OCI-LY7 (cell line): ENCODE measurements at regions of chr6 and their contacts with region 1.

Region 1: GRCh38 chr6:132300323-132300949 is 100.8 kb downstream of the MOXD1 start:
- DNase-seq: peak; percentile 82
- H3K4me3 ChIP-seq: no peak overlapping the region
- H3K27ac ChIP-seq: no peak overlapping the region
- H3K4me1 ChIP-seq: peaks cover 35% of the 10 kb centered on the region
- CTCF ChIP-seq: peak; percentile 97

Region 2: GRCh38 chr6:131858765-131859415 is 441.5 kb before region 1 on chr6:
- CTCF ChIA-PET with region 1: no interaction called
- POLR2A ChIA-PET with region 1: no interaction called
- intact Hi-C with region 1: no loop called
- DNase-seq: no peak
- H3K4me3 ChIP-seq: no peak overlapping the region
- H3K27ac ChIP-seq: no peak overlapping the region
- H3K4me1 ChIP-seq: no peaks in the 10 kb centered on the region
- CTCF ChIP-seq: no peak

Region 3: GRCh38 chr6:131923356-131923755 is 377.1 kb before region 1 on chr6:
- CTCF ChIA-PET with region 1: interaction called, 5 read pairs
- POLR2A ChIA-PET with region 1: no interaction called
- intact Hi-C with region 1: loop called (anchors 1 kb)
- DNase-seq: peak; percentile 84
- H3K4me3 ChIP-seq: no peak overlapping the region
- H3K27ac ChIP-seq: no peak overlapping the region
- H3K4me1 ChIP-seq: peaks cover 7% of the 10 kb centered on the region
- CTCF ChIP-seq: peak; percentile 95

Region 4: GRCh38 chr6:132286026-132287019 is 14.1 kb before region 1 on chr6:
- CTCF ChIA-PET with region 1: no interaction called
- POLR2A ChIA-PET with region 1: interaction called, 22 read pairs
- intact Hi-C with region 1: no loop called
- DNase-seq: peak; percentile 24
- H3K4me3 ChIP-seq: no peak overlapping the region
- H3K27ac ChIP-seq: no peak overlapping the region
- H3K4me1 ChIP-seq: peaks cover 15% of the 10 kb centered on the region
- CTCF ChIP-seq: 0 out of 2 replicates have a peak, but pooled peaks have one; percentile 19

Region 5: GRCh38 chr6:132483779-132484679 is 183.6 kb after region 1 on chr6:
- CTCF ChIA-PET with region 1: interaction called, 4 read pairs
- POLR2A ChIA-PET with region 1: interaction called, 5 read pairs
- intact Hi-C with region 1: loop called (anchors 1 kb)
- DNase-seq: peak; percentile 84
- H3K4me3 ChIP-seq: peak overlapping the region; percentile 45
- H3K27ac ChIP-seq: peak overlapping the region; percentile 83
- H3K4me1 ChIP-seq: peaks cover 59% of the 10 kb centered on the region
- CTCF ChIP-seq: peak; percentile 95

Region 6: GRCh38 chr6:132661906-132662305 is 361.5 kb after region 1 on chr6:
- CTCF ChIA-PET with region 1: no interaction called
- POLR2A ChIA-PET with region 1: no interaction called
- intact Hi-C with region 1: loop called (anchors 5 kb)
- DNase-seq: no peak
- H3K4me3 ChIP-seq: no peak overlapping the region
- H3K27ac ChIP-seq: no peak overlapping the region
- H3K4me1 ChIP-seq: no peaks in the 10 kb centered on the region
- CTCF ChIP-seq: no peak